Activated naive CD8-positive, alpha-beta T cell treated with anti-CD3 and anti-CD28 coated beads, Interleukin-2, amount 10 ng/mL, durations not matched to agents 7 days and 5 days (primary cell): ENCODE measurements at regions of chr19 and their contacts with region 1.

Region 1: DNA sequence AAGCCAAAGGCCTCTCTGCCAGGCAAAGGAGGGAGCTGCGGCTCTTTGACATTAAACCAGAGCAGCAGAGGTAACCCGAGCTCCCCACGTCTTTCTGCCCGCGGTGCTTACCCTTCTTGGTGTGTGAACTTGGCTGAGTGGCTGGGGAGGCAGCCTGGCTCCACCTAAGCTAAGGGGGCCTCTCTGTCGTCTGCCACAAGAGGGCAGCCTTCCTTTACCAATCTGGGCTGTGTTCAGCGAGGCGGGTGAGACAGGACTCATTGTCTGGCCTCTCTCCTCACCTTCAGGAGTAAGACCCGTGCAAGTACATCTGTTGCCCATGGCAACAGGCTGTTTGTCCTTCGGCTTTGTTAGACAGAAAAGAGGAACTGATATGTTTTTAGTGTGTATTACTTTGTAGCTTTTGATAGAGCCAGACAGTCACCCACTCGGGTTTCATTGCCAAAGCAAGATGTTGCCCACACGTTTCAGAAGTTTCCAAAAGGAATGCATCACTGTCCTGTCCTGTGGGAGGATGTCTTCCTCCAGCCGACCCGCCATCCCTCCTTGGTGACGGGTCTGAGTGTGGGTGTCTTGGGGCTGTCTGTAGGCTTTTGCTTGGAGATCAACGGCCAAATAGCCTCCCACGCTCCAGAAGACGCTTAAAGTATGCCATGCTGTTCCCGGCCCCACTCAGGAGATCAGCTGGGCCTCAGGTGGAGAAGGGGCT is 4.6 kb downstream of the POP4 start:
- DNase-seq: peak; percentile 79
- ATAC-seq: peak; percentile 62
- H3K4me3 Mint-ChIP-seq: no peak overlapping the region
- H3K27ac Mint-ChIP-seq: no peak overlapping the region
- H3K4me1 Mint-ChIP-seq: peaks cover 17% of the 10 kb centered on the region
- H3K27me3 Mint-ChIP-seq: no peaks in the 10 kb centered on the region

Region 2: DNA sequence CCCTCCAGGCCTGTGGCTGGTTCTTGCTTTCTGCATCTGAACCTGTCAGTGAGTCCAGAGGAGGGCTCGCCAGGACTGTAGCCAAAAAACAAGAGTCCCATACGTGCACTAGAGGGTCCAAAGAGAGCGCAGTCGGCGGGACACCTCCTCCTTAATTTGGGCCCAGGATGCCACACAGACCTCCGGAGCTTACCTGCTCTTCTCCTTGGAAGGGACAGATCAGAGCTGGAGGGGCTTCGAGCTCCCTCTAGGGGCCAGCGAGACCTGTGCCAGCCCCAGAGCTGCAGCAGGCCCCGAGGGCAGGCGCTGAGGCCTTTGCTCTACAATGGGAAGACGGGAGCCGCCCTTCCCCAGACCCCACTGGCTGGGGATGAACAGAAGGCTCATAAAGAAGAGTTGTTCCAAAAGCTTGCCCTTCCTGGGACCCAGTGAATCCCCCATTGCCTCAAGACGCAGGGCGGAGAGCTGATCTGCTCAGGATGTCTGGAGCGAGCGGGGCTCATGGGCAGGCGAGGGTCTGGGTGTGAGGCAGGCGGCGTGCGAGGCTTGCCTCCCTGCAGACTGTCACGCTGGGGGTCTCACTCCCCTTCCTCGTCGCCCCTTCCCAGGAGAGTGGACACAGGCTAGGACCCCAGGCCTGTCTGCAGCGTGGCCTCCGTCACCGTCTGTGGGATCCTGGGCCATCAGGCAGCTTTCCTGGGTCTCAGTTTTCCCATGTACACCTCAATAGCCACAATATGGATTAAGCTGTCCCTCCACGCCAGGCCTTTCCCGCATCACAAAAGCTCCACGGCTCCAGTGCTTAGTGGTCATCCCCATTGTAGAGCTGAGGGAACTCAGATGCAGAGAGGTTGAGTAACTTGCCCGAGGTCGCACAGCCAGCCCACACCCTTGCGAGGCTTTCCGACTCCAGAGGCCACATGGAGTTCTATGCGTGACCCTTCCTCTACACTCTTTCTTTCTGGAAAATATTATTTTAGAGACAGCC is 131.8 kb before region 1 on chr19:
- POLR2A ChIA-PET with region 1: no interaction called
- DNase-seq: no peak
- ATAC-seq: no peak
- H3K4me3 Mint-ChIP-seq: no peak overlapping the region
- H3K27ac Mint-ChIP-seq: no peak overlapping the region
- H3K4me1 Mint-ChIP-seq: no peaks in the 10 kb centered on the region
- H3K27me3 Mint-ChIP-seq: peaks cover 6% of the 10 kb centered on the region

Region 3: DNA sequence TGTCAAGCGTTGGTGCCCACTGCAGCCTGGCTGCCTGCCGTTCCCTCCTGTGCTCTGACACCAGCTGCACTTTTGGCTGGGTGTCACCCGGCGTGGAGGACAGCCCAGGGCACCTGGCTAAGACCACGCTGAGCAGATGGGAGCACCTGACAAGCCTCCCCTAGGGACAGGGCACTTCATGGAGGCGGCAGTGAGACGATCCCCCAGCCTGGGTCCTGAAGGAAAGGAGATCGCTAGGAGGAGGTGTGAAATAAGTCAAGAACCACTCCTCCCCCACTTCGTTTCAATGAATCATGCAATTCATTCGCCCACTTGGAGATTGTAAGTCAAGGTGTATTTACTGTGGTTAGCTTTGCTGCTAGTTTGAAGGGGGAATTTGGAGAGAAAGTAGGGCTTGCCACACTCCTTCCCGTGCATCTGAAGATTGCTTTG is 46.1 kb before region 1 on chr19:
- POLR2A ChIA-PET with region 1: no interaction called
- DNase-seq: no peak
- ATAC-seq: no peak
- H3K4me3 Mint-ChIP-seq: no peak overlapping the region
- H3K27ac Mint-ChIP-seq: no peak overlapping the region
- H3K4me1 Mint-ChIP-seq: no peaks in the 10 kb centered on the region
- H3K27me3 Mint-ChIP-seq: peaks cover 21% of the 10 kb centered on the region

Region 4: DNA sequence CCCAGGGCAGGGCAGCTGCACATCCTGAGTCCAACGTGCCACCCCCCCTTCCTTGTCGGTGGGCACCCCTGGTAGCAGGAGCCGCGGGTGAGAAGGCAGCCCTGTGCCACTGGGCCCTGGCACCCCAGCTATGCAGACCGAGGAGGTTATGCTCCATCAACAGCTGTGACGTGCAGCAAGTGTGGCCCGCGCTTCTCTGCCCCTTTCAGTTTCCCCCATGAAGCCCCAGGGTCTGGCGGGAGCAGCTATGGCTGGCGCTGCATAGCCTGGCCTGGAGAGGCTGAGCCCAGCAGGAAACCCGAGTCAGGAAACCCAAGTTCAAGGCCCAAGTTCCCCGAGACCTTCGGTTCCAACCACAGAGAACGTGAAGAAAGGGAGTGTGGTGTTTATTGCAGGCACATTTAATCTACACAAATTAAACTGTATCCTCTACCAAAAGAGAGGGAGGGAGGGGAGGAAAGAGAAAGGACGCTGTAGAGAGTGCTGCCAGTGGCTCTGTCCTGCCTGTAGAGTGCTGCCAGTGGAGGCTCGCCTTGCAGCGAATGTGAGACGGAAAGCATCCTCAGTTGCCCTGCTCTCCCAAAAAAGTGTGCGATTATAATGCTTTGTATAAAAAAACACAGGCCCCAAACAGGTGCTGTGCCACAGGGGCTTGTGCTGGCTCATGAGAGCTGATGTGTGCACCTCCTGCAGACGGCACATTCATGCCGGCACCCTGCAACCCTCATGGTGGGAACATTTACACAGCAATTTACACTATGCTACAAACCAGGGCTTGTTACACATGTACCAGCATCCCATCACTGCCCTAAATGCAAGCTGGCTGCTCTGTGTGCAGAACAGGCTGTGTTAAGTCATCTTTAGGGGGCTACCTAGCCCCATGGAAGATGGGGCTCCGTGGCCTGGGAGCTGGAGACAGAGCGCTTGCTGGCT is 11.7 kb after region 1 on chr19:
- POLR2A ChIA-PET with region 1: interaction called, 30 read pairs
- DNase-seq: peak; percentile 57
- ATAC-seq: peak; percentile 81
- H3K4me3 Mint-ChIP-seq: peak overlapping the region; percentile 75
- H3K27ac Mint-ChIP-seq: peak overlapping the region; percentile 82
- H3K4me1 Mint-ChIP-seq: peaks cover 43% of the 10 kb centered on the region
- H3K27me3 Mint-ChIP-seq: no peaks in the 10 kb centered on the region

Region 5: GRCh38 chr19:29671393-29672160 is 60.9 kb after region 1 on chr19:
- POLR2A ChIA-PET with region 1: interaction called, 72 read pairs
- DNase-seq: peak; percentile 76
- ATAC-seq: peak; percentile 69
- H3K4me3 Mint-ChIP-seq: peak overlapping the region; percentile 78
- H3K27ac Mint-ChIP-seq: peak overlapping the region; percentile 94
- H3K4me1 Mint-ChIP-seq: peaks cover 70% of the 10 kb centered on the region
- H3K27me3 Mint-ChIP-seq: no peaks in the 10 kb centered on the region

Region 6: GRCh38 chr19:29694669-29695627 is 84.2 kb after region 1 on chr19:
- POLR2A ChIA-PET with region 1: interaction called, 12 read pairs
- DNase-seq: peak; percentile 90
- ATAC-seq: peak; percentile 99
- H3K4me3 Mint-ChIP-seq: no peak overlapping the region
- H3K27ac Mint-ChIP-seq: peak overlapping the region; percentile 51
- H3K4me1 Mint-ChIP-seq: peaks cover 15% of the 10 kb centered on the region
- H3K27me3 Mint-ChIP-seq: no peaks in the 10 kb centered on the region

Region 7: DNA sequence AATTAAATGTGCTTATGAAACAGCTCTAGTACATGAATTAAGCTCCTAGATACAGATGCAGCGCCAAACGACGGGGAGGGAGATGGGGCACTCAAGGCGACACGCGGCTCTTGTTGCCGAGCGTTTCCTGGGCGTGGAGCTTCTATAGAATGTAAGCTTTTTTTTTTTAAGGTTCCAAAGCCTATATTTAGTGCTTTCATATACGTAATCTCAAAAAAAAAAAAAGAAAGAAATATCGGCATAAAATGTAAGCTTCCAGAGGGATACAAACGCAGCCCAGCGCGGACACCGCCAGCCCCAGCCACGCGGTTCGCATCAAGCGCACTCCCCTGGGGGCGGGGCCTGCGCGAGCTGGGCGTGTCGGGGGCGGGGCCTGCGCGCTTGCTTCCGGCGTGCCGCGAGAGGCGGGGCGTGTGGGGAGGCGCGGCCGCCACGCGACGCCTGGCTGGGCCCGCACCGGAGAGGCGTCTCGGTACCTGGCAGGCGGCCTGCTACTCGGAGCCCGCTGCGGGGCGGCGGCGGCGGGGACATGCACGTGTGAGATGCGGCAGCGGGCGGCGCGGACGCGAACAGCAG is 331.2 kb after region 1 on chr19 and contains the start of gene URI1:
- POLR2A ChIA-PET with region 1: interaction called, 17 read pairs
- DNase-seq: peak; percentile 100
- ATAC-seq: peak; percentile 81
- H3K4me3 Mint-ChIP-seq: peak within 1 kb of the TSS; percentile 98
- H3K27ac Mint-ChIP-seq: peak within 1 kb of the TSS; percentile 93
- H3K4me1 Mint-ChIP-seq: peaks cover 36% of the 10 kb centered on the region
- H3K27me3 Mint-ChIP-seq: peaks cover 2% of the 10 kb centered on the region
- total RNA-seq, gene URI1: 66.1 to 67.0 TPM